CD14-positive monocyte (primary cell): ENCODE measurements at regions of chr1 and their contacts with region 1.

Region 1: DNA sequence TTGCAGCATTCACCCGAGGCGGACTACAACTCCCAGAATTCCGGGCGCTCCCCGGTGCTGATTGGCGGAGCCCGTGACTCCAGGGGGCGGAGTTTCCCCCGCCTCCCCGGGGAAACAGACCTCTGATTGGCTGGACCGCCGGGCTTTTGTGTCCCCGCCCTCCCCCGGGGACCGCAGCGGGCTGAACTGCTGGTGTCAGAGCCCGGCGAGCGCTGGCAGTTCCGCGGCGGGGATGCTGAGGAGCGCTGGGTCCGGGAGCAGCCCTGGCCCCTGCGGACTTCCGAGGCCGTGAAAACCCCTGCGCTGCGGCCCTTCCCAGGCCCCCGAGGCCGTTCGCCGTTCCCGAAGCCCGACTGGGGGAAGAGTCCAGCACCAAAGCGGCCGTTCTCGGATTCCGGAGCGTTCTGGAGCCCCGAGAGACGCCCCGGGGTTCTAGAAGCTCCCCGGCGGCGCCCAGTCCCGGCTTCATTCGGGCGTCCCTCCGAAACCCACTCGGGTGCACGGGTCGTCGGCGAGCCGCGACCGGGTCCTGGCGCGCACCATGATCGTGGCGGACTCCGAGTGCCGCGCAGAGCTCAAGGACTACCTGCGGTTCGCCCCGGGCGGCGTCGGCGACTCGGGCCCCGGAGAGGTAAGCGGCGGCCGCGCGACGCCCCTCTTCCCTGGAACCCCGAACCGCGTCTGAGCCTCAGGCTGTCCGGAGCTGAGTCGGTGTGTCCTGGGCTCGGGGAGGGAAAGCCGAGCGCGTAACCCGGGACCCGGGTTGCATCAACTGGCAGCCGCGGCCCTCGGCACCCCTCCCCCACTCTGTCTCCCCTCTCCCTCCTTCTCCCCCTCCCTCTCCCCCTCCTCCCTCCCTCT is at the start of gene SESN2:
- DNase-seq: peak; percentile 99 to 100 (median 100)
- H3K4me3 ChIP-seq: peak within 1 kb of the TSS; percentile 84 to 96 (median 96)
- H3K4me3 Mint-ChIP-seq: peak within 1 kb of the TSS; percentile 80 to 81
- H3K27ac ChIP-seq: peak within 1 kb of the TSS; percentile 88 to 92
- H3K27ac Mint-ChIP-seq: peak within 1 kb of the TSS; percentile 95 to 99 (median 96)
- H3K4me1 ChIP-seq: peaks cover 23 to 24% of the 10 kb centered on the region in 2 donors
- H3K4me1 Mint-ChIP-seq: peaks cover 26% of the 10 kb centered on the region
- H3K27me3 ChIP-seq: peaks cover 2 to 14% of the 10 kb centered on the region in 2 donors
- H3K27me3 Mint-ChIP-seq: peaks cover 15 to 22% (median 16%) of the 10 kb centered on the region in 3 donors
- CTCF ChIP-seq: no peak
- polyA plus RNA-seq, gene SESN2: 5.0 to 15.7 (median 5.1) TPM

Region 2: DNA sequence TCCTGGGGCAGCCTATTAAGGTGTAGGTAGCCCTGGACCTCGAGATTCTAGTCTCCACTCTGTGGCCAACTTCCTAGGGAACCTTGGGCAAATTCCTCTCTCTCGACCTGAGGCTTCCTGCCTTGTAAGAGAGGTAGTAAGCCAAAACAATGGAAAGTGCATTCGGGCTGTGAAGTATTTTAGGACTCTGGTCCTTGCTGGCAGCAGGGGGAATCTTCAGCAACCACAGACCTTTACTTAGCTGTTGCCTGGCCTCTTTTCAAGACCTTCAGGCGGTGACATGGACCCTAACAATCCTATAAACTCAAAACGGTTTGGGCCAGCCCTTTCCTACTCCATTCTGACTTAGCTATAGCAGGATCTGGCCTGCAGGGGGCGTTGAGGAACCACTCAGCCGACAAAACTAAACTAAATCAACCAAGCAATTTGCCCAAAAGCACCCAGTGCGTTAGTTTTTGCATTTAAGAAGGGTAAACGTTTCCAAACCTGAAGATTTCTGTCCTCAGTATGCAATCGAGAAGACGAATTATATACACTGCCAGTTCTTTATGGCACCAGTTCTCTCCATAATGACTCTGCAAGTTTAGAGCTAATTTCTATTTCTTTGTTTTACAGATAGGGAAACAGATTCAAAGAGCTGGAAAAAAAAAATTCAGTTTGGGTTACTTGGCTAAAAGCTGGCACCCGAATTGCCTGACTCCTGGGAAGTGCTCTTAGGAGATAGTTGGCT is 11.1 kb before region 1 on chr1:
- intact Hi-C with region 1: loop called in 1 of 2 experiments (anchors 2 kb)
- DNase-seq: peak; percentile 69 to 77 (median 76)
- H3K4me3 ChIP-seq: peak overlapping the region in 2 of 3 experiments; percentile 14 to 96
- H3K4me3 Mint-ChIP-seq: peak overlapping the region; percentile 61 to 82
- H3K27ac ChIP-seq: peak overlapping the region; percentile 75 to 89
- H3K27ac Mint-ChIP-seq: peak overlapping the region; percentile 94 to 99 (median 96)
- H3K4me1 ChIP-seq: peaks cover 66 to 69% of the 10 kb centered on the region in 2 donors
- H3K4me1 Mint-ChIP-seq: peaks cover 63% of the 10 kb centered on the region
- H3K27me3 ChIP-seq: no peaks in the 10 kb centered on the region
- H3K27me3 Mint-ChIP-seq: no peaks in the 10 kb centered on the region
- CTCF ChIP-seq: peak; percentile 97

Region 3: DNA sequence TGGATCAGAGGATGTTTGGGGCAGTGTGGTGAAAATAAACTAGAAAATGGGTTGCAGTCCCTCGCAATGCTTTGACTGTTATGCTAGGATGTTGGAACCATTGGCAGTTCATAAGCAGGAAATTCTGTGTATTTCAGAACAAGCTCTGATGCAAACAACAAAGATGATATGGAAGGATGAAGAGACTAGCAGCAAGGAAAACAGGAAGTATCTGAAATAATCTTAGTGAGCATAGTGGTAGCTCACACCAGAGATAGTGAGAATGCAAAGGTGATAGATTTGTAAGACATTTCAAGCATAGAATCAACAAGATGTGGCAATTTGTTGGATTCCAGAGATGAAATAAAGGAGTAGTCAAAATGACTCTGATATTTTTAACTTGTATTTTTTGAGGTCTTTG is 235.2 kb after region 1 on chr1:
- intact Hi-C with region 1: no loop called
- DNase-seq: no peak
- H3K4me3 ChIP-seq: no peak overlapping the region
- H3K4me3 Mint-ChIP-seq: no peak overlapping the region
- H3K27ac ChIP-seq: no peak overlapping the region
- H3K27ac Mint-ChIP-seq: peak overlapping the region in 1 of 7 donors; percentile 37
- H3K4me1 ChIP-seq: no peaks in the 10 kb centered on the region
- H3K4me1 Mint-ChIP-seq: no peaks in the 10 kb centered on the region
- H3K27me3 ChIP-seq: no peaks in the 10 kb centered on the region
- H3K27me3 Mint-ChIP-seq: no peaks in the 10 kb centered on the region
- CTCF ChIP-seq: no peak

Region 4: DNA sequence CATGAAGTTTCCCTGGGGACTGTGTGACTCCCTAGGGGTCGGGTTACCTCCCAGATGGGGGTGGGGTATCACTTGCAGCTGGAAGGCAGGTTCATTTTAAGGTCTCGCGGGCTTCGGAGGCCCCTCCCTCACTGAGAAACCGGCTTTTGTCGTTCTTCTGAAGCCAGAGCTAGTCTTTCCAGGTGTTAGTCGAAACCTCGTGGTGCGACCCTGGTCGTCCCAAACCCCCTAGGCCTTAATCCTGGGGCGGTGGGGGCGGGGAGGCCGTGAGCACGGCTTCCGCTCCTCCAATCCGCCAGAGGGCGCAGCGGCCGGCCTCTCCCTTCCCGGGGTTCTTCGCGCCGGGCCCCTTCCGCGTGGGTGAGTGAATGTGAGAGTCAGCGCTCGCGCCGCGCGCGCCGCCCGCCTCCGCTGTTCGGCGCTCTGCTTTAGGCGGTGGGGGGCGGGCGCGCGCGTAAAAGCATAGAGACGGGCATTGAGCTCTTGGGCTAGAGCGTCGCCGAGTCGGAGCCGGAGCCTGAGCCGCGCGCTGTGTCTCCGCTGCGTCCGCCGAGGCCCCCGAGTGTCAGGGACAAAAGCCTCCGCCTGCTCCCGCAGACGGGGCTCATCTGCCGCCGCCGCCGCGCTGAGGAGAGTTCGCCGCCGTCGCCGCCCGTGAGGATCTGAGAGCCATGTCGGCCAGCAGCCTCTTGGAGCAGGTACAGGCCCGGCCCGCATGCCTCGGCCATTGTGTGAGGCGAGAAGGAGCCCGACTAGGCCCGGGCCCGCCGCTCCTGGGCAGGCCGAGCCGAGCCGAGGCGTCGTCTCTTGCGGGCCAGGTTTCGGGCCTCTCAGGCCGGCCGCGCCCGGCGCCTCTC is 477.1 kb after region 1 on chr1 and contains the start of gene YTHDF2:
- intact Hi-C with region 1: loop called in 1 of 2 experiments (anchors 10 kb)
- DNase-seq: peak; percentile 95 to 96 (median 95)
- H3K4me3 ChIP-seq: peak within 1 kb of the TSS; percentile 73 to 95 (median 78)
- H3K4me3 Mint-ChIP-seq: peak within 1 kb of the TSS; percentile 86 to 99
- H3K27ac ChIP-seq: peak within 1 kb of the TSS; percentile 74 to 91
- H3K27ac Mint-ChIP-seq: peak within 1 kb of the TSS; percentile 91 to 97 (median 95)
- H3K4me1 ChIP-seq: peaks cover 20 to 38% of the 10 kb centered on the region in 2 donors
- H3K4me1 Mint-ChIP-seq: peaks cover 27% of the 10 kb centered on the region
- H3K27me3 ChIP-seq: no peaks in the 10 kb centered on the region
- H3K27me3 Mint-ChIP-seq: peaks cover 0 to 2% (median 0%) of the 10 kb centered on the region in 3 donors
- CTCF ChIP-seq: peak; percentile 99
- polyA plus RNA-seq, gene YTHDF2: 20.7 to 81.6 (median 74.2) TPM